Activated CD4-positive, alpha-beta T cell treated with anti-CD3 and anti-CD28 coated beads for 36 hours (primary cell): ENCODE measurements at regions of chr2 and their contacts with region 1.

Region 1: GRCh38 chr2:96265840-96266679 is at the starts of genes CIAO1 and TMEM127:
- DNase-seq: peak; percentile 99
- ATAC-seq: peak; percentile 94
- H3K4me3 Mint-ChIP-seq: peak within 1 kb of the TSS; percentile 99
- H3K27ac Mint-ChIP-seq: peak within 1 kb of the TSS; percentile 99
- H3K4me1 Mint-ChIP-seq: peaks cover 57% of the 10 kb centered on the region
- H3K27me3 Mint-ChIP-seq: no peaks in the 10 kb centered on the region
- total RNA-seq, gene CIAO1: 72.1 to 77.6 TPM
- total RNA-seq, gene TMEM127: 16.6 to 17.9 TPM

Region 2: DNA sequence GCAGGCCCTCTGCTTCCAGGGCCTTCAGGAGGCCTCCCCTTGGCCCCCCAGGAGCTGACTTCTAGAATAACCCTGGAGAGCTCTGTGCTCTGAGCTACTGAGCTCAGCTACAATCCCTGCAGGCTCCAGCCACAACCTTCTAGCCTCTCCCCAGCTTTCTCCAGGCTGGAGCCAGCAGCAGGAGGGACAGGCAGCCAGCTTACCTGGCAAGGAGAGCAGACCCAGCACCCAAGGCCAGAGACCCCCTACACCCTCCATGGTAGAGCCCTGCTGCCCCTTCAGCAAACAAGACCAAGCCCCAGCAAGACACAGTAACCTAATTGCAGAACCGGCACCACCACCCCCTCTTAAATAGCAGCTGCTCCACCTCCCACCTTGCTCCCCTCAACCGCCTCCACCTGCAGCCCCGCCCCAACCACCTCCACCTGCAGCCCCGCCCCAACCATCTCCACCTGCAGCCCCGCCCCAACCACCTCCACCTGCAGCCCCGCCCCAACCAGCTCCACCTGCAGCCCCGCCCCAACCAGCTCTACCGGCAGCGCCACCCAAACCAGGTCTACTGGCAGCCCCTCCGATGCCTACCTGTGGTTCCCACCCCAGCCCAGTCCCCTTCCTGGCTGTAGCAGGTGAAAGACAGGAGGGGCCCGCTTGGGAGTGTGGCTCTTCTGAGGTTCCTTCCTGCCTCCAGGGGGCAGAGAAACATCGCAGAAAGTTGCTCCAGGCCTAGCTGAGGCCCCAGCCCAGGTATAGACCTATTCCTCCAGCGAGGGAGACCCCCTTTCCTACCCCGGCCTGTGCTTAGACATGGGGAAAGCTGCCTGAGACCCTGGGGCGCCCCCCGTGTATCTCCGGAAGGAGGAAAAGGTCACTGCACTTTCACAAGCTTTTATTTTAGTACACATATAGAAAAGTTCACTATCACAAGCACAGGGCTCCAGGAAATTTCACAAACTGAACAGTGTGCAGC is 127.6 kb before region 1 on chr2 and contains the start of gene ASTL:
- CTCF ChIA-PET with region 1: interaction called, 10 read pairs
- POLR2A ChIA-PET with region 1: no interaction called
- intact Hi-C with region 1: no loop called
- DNase-seq: peak; percentile 82
- ATAC-seq: peak; percentile 33
- H3K4me3 Mint-ChIP-seq: no peak within 1 kb of the TSS
- H3K27ac Mint-ChIP-seq: no peak within 1 kb of the TSS
- H3K4me1 Mint-ChIP-seq: peaks cover 28% of the 10 kb centered on the region
- H3K27me3 Mint-ChIP-seq: no peaks in the 10 kb centered on the region
- total RNA-seq, gene ASTL: 2.5 to 2.8 TPM

Region 3: DNA sequence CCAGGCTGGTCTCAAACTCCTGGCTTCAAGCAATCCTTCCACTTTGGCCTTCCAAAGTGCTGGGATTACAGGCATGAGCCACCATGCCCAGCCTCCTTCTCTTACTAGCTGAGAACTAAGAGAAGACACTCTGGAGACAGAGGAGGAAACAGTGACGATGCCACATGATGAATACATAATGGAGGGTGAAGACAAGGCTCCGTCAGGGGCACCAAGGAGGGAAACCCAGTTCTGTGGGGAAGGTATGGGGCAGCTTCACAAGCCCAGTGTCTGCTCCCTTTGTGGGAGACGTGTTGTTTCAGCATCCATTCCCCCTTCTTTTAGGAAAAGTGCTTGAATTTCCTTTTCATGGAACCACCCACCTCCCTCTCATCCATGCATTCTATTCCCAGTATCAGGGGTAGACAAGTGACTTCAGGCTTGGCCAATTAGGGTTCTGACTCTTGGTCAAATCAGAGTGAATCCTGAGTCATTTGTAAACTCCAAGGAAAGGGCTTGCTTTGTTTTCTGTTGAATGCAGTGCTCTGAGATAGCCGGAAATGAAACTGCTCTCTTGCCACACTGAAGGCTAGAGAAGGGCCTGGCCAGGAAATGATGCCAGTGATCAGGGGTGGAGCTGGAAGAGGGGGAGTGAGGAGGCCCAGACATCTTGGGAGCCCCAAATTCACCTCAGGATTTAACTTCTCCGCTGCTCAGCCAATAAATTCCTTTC is 24.0 kb before region 1 on chr2:
- CTCF ChIA-PET with region 1: interaction called, 5 read pairs
- POLR2A ChIA-PET with region 1: interaction called, 4 read pairs
- intact Hi-C with region 1: loop called in 1 of 2 experiments (anchors 1 kb)
- DNase-seq: peak; percentile 78
- ATAC-seq: peak; percentile 94
- H3K4me3 Mint-ChIP-seq: peak overlapping the region; percentile 13
- H3K27ac Mint-ChIP-seq: peak overlapping the region; percentile 91
- H3K4me1 Mint-ChIP-seq: peaks cover 45% of the 10 kb centered on the region
- H3K27me3 Mint-ChIP-seq: no peaks in the 10 kb centered on the region

Region 4: DNA sequence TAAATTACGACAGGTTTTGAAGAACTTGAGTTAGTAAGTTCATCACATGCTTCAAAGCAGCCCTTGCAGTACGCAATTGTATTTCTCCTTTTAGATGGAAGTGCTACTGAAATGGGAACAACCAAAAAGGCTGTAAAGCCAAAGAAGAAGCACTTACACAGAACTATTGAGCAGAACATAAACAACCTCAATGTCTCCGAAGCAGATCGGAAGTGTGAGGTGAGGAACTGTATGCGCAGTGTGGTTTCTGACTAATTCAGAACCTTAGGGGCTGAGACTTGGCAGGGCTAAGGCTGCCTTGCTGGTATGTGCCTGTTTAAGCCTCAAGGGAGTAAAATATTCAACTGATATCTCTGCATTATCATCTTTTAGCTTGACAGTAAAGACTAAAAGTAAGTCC is 78.0 kb after region 1 on chr2:
- CTCF ChIA-PET with region 1: no interaction called
- POLR2A ChIA-PET with region 1: no interaction called
- intact Hi-C with region 1: loop called in 1 of 2 experiments (anchors 5 kb)
- DNase-seq: peak; percentile 56
- ATAC-seq: peak; percentile 74
- H3K4me3 Mint-ChIP-seq: no peak overlapping the region
- H3K27ac Mint-ChIP-seq: peak overlapping the region; percentile 55
- H3K4me1 Mint-ChIP-seq: peaks cover 46% of the 10 kb centered on the region
- H3K27me3 Mint-ChIP-seq: no peaks in the 10 kb centered on the region

Region 5: DNA sequence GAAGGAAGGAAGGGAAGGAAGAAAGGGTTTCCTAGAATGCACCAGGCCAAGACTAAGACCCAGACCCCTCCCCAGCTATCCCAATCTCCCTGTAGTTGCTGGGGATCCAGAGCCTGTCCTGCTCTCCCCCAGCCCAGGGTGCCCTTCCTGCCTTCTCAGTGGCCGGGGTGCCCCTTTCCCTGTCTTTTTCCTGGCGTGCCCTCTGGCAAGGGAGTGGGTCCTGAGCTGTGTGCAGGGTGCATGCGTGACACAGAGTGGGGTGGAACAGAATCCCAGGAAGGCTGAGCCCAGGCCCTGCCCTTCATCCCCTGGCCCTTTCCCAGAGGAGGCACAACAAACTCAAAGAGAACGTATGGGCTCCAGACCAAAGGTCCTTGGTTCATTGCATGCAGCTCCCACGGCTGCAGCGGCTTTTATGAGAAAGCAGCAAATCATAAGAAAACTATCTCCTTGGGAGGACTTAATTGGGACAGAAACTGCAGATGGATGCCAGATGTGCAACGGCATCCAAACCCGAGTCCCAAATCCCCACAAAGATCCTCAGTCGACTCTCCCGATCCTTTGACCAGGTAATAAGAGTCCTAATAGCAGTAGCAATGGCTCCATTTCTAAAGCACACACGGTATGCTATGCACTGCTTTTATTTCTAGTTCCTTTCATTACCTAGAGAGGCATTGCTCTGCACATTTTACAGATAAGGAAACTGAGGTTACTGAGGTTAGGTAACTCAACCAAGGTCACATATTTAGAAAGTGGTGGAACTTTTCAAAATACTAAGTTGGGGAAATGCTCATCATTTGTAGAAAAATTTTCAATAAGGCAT is 257.8 kb after region 1 on chr2:
- CTCF ChIA-PET with region 1: no interaction called
- POLR2A ChIA-PET with region 1: no interaction called
- intact Hi-C with region 1: no loop called
- DNase-seq: no peak
- ATAC-seq: peak; percentile 5
- H3K4me3 Mint-ChIP-seq: peak overlapping the region; percentile 33
- H3K27ac Mint-ChIP-seq: peak overlapping the region; percentile 87
- H3K4me1 Mint-ChIP-seq: peaks cover 57% of the 10 kb centered on the region
- H3K27me3 Mint-ChIP-seq: peaks cover 2% of the 10 kb centered on the region

Region 6: GRCh38 chr2:96638144-96639121 is 372.4 kb after region 1 on chr2 and contains the start of gene KANSL3:
- CTCF ChIA-PET with region 1: no interaction called
- POLR2A ChIA-PET with region 1: no interaction called
- intact Hi-C with region 1: loop called in 1 of 2 experiments (anchors 1 kb)
- DNase-seq: peak; percentile 94
- ATAC-seq: peak; percentile 86
- H3K4me3 Mint-ChIP-seq: peak within 1 kb of the TSS; percentile 91
- H3K27ac Mint-ChIP-seq: peak within 1 kb of the TSS; percentile 93
- H3K4me1 Mint-ChIP-seq: peaks cover 30% of the 10 kb centered on the region
- H3K27me3 Mint-ChIP-seq: no peaks in the 10 kb centered on the region
- total RNA-seq, gene KANSL3: 33.9 to 39.1 TPM

Region 7: DNA sequence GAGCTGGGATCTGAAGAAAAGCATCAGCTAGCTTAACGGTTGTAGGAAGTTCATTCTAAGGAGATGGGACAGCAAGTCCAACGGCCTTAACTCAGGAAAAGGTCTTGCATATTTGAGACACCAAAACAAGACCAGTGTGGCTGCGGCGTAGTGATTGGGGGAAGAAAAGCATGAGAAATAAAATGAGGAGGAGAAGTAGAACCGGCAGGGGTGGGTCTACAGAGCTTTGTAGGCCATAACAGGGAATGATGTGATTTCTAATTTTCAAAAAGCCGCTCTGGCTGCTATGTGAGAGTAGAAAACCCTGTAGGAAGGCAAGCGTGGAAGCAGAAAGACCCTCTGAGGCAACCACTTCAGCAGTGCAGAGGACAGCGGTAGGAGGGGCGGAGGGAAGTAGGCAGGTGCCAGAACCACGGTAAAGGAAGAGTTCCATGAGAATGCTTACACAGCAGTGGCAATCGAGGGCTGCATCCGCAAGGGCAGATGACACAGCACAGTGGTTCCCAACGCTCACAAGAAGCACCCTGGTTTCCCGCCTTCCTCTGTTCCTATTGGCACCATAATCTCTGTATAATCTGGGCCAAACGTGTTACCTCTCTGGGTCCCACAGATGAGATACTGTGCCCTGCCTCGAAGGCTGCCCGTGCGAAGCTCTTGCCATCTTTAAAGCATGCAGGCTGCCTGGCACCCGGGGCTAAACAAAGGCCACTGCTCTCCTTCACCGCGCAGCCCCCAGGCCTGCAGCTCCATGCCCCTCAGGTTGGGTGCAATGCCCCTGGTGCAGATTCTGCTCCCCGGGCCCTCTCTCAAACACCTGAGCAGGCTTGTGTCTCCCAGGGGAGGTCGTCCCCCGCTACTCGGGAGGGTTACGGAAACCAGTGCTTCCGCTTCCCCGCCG is 591.0 kb after region 1 on chr2:
- CTCF ChIA-PET with region 1: no interaction called
- POLR2A ChIA-PET with region 1: no interaction called
- intact Hi-C with region 1: loop called in 1 of 2 experiments (anchors 1 kb)
- DNase-seq: peak; percentile 66
- ATAC-seq: no peak
- H3K4me3 Mint-ChIP-seq: peak overlapping the region; percentile 90
- H3K27ac Mint-ChIP-seq: peak overlapping the region; percentile 79
- H3K4me1 Mint-ChIP-seq: peaks cover 36% of the 10 kb centered on the region
- H3K27me3 Mint-ChIP-seq: no peaks in the 10 kb centered on the region